ENCODE measurements at regions of chr7 and their contacts with region 1.

Region 1: DNA sequence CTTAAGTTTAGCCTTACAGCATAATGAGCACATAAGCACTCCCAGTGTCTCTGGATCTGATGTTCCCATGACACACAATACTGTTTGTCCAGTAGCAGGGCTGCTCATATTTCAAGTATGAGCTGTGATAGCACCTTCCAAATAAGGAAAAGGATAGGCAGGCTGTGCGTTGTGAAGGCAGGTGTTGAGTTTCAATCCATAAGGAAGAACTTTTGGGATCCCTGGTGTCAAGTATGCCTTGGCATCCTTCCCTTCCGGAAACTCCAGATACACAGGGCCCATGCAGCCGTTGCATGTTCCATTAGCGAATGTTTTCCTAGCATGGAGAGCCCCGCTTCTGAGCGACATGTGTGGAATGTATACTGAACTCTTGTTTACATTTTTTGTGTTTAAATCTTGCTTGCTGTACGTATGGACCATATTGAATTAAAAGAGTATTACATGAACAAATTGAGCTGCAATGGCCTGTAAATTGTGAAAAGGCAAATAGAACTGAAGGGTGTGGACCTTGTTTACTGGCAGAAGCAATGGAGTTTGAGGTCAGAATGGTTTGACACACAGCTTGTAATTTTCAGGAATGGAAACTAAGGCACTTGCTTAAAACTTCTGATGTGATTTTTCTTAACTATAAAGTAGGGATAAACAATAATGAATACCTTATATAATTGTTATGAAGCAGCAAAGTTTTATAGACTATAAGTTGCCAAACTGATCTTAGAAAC is 33.8 kb upstream of the COBL start:
- DNase-seq: peak in 1 of 2 donors; percentile 76
- H3K4me3 ChIP-seq: no peak overlapping the region
- CTCF ChIP-seq: no peak
- POLR2A ChIP-seq: no peak

Region 2: DNA sequence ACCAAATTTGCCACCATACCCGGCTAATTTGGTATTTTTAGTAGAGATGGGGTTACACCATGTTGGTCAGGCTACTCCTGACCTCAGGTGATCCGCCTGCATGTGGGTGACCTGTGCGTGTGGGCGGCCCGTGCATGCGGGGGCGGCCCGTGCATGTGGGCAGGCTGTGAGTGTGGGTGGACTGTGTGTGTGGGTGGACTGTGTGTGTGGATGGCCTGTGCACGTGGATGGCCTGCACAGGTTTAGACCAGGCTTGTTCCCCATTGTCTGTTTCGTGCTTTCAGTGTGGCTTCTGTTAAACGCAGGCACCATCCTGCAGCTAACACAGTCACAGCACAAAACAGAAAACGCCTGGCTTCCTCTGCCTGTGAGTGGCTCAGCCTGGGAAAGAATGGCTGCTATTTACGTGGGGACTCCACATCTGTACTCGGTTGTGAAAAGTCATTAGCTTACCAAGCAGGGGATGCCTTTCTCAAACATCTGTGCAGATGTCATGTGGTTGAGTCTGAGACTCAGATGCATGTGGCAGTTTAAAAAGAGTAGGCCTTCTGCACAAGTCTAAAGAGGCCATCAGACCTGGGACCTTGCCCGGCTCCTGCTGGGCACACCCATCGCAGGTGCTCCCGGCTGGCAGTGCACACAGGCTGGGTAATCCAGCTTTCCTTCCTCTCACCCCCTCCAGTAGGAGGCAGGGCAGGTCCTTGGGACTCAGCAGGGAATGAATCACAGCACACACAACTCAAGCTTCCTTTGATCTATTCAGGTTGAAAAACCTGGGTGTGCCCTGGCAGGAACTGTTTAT is 125.3 kb before region 1 on chr7:
- intact Hi-C with region 1: loop called (anchors 10 kb)
- DNase-seq: peak; percentile 58 to 85
- H3K4me3 ChIP-seq: no peak overlapping the region
- CTCF ChIP-seq: no peak
- POLR2A ChIP-seq: no peak

Region 3: DNA sequence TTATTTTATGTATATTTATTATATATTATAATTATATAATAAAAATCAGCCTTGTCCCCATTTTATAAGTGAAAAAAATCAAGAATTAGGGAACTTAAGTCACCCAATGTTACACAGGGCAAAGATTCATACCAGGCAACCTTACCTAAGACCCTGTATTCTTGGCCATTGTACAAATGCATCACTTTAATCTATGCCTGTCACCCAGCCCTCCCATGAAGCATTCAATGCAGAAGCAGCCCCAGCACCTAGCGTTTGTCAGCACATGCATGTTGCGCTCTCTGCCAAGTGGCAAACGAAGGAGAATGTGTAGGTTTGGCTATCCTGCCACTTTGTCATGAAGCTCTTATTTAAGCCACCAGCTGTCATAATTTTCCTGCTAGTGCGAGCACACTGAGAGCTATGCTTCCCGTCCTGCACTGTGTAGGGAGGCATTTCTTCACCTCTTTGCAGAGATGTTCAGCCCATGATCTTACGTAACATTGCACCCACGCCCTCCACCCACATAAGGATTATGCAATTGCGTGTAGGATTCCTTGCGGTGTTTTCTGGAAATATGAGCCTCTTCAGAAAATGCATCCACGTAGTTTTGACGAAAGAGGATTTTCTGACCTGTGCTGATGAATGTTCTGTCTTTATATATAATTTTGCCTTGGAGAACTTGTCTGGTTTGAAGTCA is 26.0 kb before region 1 on chr7:
- intact Hi-C with region 1: no loop called
- DNase-seq: peak in 1 of 2 donors; percentile 72
- H3K4me3 ChIP-seq: no peak overlapping the region
- CTCF ChIP-seq: no peak
- POLR2A ChIP-seq: no peak

Measured in lower leg skin (tissue), 4 donors.